Activated CD8-positive, alpha-beta T cell treated with anti-CD3 and anti-CD28 coated beads, Interleukin-2, amount 10 ng/mL, durations not matched to agents 7 days and 5 days (primary cell): ENCODE measurements at regions of chr1 and their contacts with region 1.

Region 1: DNA sequence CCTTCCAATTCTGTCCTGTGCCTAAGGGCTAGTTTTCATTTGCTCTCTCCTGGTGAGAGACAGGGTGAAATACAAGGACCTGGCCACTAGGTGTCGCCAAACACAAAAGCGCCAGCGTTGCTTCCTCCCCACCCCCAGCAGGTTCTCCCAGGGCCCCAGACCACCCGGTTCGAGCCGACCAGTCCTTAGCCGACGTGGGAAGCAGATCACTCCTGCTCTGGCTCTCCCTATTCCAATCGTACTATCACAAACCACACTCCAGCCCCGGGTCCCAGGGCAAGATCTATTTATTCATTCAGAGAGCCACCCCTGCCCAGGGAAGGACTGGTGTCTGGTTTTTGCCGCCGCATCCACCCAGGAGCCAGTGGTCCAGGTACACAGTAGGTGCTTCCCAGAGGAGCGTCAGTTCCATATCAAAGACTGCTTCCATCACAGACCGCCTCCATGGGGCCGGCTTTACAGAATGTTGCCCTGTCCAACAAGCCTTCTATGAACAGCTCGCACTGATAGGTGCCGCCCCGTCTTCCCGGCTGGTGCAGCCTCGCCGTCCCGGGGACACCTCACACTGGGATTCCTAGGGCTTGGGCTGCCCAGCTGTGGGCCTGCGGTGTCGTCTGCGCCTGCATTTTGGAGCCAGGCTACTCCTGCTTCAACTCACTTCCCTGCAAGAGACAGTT is 35.0 kb downstream of the CTNNBIP1 start:
- DNase-seq: peak; percentile 84
- ATAC-seq: peak; percentile 94
- H3K4me3 Mint-ChIP-seq: no peak overlapping the region
- H3K27ac Mint-ChIP-seq: peak overlapping the region; percentile 50
- H3K4me1 Mint-ChIP-seq: peaks cover 19% of the 10 kb centered on the region
- H3K27me3 Mint-ChIP-seq: no peaks in the 10 kb centered on the region

Region 2: DNA sequence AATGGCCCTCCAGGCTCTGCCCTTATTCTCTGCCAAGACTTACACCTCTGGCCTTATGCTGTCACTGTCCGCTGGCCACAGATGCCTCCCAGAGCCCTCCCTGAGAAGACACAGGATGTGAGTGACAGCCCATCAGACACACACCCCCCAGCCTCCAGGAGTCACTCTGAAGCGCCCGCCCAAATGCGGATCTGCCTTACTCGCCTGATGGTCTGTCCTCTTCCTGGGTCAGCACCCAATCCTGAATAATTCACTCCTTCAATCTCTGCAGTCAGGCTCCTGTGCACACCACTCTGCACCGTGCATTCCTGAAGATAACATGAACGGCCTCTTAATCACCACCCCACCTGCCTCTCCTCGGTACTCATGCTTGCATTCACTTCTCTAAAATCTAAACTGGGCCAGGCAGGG is 66.0 kb before region 1 on chr1:
- CTCF ChIA-PET with region 1: no interaction called
- POLR2A ChIA-PET with region 1: no interaction called
- DNase-seq: no peak
- ATAC-seq: no peak
- H3K4me3 Mint-ChIP-seq: no peak overlapping the region
- H3K27ac Mint-ChIP-seq: peak overlapping the region; percentile 60
- H3K4me1 Mint-ChIP-seq: peaks cover 37% of the 10 kb centered on the region
- H3K27me3 Mint-ChIP-seq: no peaks in the 10 kb centered on the region

Region 3: GRCh38 chr1:9835758-9836450 is 39.2 kb before region 1 on chr1:
- CTCF ChIA-PET with region 1: no interaction called
- POLR2A ChIA-PET with region 1: no interaction called
- DNase-seq: no peak
- ATAC-seq: no peak
- H3K4me3 Mint-ChIP-seq: no peak overlapping the region
- H3K27ac Mint-ChIP-seq: no peak overlapping the region
- H3K4me1 Mint-ChIP-seq: no peaks in the 10 kb centered on the region
- H3K27me3 Mint-ChIP-seq: peaks cover 8% of the 10 kb centered on the region

Region 4: DNA sequence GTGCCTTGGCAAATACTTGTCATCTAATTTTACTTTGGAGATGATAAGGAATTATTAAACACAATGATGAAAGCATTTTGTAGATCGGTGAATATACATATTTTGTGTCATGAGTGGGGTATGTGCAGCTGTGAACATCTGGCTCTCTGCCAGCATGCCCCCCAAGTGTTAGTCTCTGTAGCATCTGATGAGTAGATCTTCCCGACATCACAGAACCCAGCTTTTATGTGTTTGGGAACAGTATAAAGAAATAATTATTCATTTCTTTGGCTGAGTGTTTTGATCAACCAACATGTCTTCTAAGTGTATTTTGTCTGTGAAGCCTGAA is 39.5 kb after region 1 on chr1:
- CTCF ChIA-PET with region 1: interaction called, 24 read pairs
- POLR2A ChIA-PET with region 1: interaction called, 3 read pairs
- DNase-seq: no peak
- ATAC-seq: no peak
- H3K4me3 Mint-ChIP-seq: no peak overlapping the region
- H3K27ac Mint-ChIP-seq: no peak overlapping the region
- H3K4me1 Mint-ChIP-seq: peaks cover 12% of the 10 kb centered on the region
- H3K27me3 Mint-ChIP-seq: peaks cover 3% of the 10 kb centered on the region